G401 (cell line): ENCODE measurements at regions of chr20 and their contacts with region 1.

Region 1: GRCh38 chr20:37519508-37520128 is 1.4 kb upstream of the NNAT start:
- DNase-seq: peak; percentile 17

Region 2: GRCh38 chr20:37270576-37271420 is 248.8 kb before region 1 on chr20:
- in situ Hi-C with region 1: loop called (anchors 25 kb)
- DNase-seq: no peak

Region 3: GRCh38 chr20:37567334-37568192 is 47.9 kb after region 1 on chr20:
- in situ Hi-C with region 1: no loop called
- DNase-seq: no peak

Region 4: DNA sequence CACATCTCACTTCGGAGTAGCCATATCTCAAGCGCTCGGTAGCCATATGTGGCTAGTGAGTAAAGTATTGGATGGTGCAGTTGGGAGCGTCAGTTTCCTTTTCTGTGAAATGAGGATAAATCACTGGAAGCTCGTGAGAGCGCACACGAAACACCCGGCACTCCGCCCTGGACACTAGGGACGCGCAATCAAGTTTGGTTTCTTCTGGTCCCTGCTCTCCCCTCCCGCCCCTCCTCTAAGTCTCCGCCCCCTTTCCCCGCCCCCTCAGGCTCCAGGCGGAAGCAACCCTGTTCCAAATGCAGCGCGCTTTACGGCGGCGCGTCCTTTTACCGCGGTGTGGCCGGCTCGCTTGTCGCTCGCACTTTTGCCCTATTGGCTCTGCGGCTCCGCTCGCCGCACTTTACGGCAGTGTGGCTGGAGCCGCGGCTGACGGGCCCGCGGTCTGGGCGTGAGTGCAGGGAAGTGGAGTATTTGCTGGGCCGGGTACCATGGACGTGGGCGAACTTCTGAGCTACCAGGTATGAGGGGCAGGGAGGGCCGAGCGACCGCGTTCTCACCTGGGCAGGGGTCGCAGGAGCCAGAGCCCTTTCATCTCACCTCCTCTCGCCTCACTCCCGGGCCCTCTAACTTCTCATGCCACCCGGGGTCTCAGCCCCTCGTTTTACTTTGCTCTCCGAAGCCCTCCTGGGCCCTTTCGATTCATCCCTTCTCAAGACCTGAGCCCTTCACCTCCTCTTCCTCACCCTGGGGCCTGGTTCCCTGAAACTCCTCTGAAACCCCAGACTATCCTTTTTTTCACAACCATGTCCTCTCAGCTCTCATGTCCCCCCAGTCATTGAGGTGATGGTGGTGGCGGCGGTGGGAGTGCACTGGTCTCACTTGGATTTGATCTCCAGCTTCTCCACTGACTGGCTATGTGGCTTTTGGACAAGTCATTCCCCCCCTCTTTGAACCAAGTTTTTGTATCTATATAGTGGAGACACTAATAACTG is 174.3 kb after region 1 on chr20 and contains the start of gene CTNNBL1:
- in situ Hi-C with region 1: no loop called
- DNase-seq: peak; percentile 97
- total RNA-seq, gene CTNNBL1: 81.2 and 119 TPM in 2 replicates